ENCODE measurements at regions of chr1 and their contacts with region 1.

Region 1: GRCh38 chr1:46718727-46719622 is at the start of gene EFCAB14:
- DNase-seq: peak; percentile 75
- ATAC-seq: peak; percentile 99
- H3K4me3 ChIP-seq: peak within 1 kb of the TSS; percentile 89 to 96
- H3K27ac ChIP-seq: peak within 1 kb of the TSS; percentile 88
- H3K4me1 ChIP-seq: peaks cover 17% of the 10 kb centered on the region
- H3K27me3 ChIP-seq: no peaks in the 10 kb centered on the region
- CTCF ChIP-seq: no peak
- total RNA-seq, gene EFCAB14: 86.8 TPM

Region 2: DNA sequence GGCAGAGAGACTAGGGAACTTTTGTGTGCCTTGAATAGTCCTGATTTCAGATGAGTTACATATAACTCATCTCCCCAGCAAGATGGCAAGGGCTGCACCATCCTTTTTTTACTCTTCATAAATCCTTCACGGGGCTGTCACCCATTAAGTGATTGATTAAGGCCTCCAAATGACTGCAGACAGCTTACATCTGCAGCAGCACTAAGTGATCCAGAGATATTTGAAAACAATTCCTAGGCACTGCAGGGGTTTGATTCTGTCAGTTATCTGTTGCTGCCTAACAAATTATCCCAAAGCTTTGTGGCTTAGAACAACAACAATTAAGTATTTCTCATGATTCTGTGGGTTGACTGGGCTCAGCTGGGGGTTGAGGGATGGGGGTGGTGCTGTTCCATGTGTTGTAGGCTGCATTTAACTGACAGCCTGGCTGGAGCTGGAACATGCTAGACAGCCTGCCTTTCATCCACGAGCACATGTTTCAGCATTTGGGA is 28.0 kb before region 1 on chr1:
- CTCF ChIA-PET with region 1: interaction called, 5 read pairs
- POLR2A ChIA-PET with region 1: interaction called, 11 read pairs
- in situ Hi-C with region 1: no loop called
- intact Hi-C with region 1: no loop called
- DNase-seq: no peak
- ATAC-seq: no peak
- H3K4me3 ChIP-seq: no peak overlapping the region
- H3K27ac ChIP-seq: no peak overlapping the region
- H3K4me1 ChIP-seq: no peaks in the 10 kb centered on the region
- H3K27me3 ChIP-seq: no peaks in the 10 kb centered on the region
- CTCF ChIP-seq: no peak

Measured in Panc1 (cell line).